Mammary epithelial cell (primary cell): ENCODE measurements at regions of chr5 and their contacts with region 1.

Region 1: DNA sequence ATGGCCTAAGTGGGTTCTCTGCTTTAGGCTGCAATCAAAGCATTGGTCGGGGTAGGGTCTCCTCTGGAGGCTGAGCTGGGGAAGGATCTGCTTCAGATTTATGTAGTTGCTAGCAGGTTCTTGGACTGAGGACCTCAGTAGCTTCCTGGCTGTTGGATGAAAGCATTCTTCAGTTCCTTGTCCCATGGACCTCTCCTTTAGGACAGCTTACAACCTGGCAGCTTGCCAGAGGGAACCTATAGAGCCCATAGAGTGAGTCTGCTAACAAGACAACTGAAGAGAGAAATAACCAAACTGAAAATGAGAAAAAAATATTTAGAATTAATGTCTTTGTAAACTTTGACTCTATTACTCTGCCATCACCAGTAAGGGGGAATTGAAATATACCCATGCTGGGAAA is 12.4 kb downstream of the MRPS30 start:
- DNase-seq: no peak
- H3K4me3 ChIP-seq: no peak overlapping the region
- H3K27ac ChIP-seq: no peak overlapping the region
- H3K4me1 ChIP-seq: no peaks in the 10 kb centered on the region
- H3K27me3 ChIP-seq: no peaks in the 10 kb centered on the region
- CTCF ChIP-seq: no peak

Region 2: DNA sequence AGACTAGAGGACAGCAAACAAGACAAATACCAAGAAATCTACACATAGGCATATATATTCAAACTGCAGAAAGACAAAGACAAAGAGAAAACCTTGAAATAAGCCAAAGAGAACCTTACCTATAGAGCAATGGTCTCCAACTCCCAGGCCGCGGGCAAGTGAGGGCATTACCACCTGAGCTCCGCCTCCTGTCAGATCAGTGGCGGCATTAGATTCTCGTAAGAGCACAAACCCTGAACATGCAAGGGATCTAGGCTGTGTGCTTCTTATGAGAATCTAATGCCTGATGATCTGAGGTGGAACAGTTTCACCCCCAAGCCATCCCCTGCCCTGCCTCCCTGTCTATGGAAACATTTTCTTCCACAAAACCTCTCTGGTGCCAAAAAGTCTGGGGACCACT is 113.4 kb before region 1 on chr5:
- CTCF ChIA-PET with region 1: no interaction called
- dilution Hi-C with region 1: no loop called
- in situ Hi-C with region 1: no loop called
- intact Hi-C with region 1: no loop called
- DNase-seq: no peak
- H3K4me3 ChIP-seq: no peak overlapping the region
- H3K27ac ChIP-seq: no peak overlapping the region
- H3K4me1 ChIP-seq: no peaks in the 10 kb centered on the region
- H3K27me3 ChIP-seq: no peaks in the 10 kb centered on the region
- CTCF ChIP-seq: no peak

Region 3: DNA sequence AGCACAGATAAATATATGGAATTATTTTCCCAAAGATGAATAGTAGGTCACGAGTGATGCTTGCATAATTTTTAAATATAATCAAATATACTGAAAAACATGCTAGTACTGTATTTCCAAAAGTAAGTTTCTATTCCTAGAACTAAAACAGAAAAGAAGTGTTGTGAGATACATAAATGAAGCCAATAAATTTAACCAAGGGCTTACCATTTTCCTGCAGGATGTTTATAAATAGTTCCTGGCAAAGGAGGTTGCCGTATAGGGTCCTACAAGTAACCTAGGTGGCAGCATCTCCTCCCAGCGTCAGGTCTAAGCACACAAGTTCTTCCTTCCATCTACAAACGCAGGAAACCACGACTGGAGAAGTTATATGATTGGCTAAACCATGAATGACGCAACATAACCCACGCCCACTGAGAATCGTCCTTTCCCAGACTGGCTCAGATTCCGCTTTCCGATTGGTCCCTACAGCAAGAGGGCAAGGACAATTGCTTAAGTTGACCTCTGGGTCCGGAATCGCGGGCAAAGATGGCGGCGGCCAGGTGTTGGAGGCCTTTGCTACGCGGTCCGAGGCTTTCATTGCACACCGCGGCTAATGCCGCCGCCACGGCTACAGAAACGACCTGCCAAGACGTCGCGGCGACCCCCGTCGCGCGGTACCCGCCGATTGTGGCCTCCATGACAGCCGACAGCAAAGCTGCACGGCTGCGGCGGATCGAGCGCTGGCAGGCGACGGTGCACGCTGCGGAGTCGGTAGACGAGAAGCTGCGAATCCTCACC is 12.5 kb before region 1 on chr5 and contains the start of gene MRPS30:
- CTCF ChIA-PET with region 1: interaction called, 25 read pairs
- dilution Hi-C with region 1: no loop called
- in situ Hi-C with region 1: no loop called
- intact Hi-C with region 1: no loop called
- DNase-seq: peak; percentile 99
- H3K4me3 ChIP-seq: peak within 1 kb of the TSS; percentile 82 to 93 (median 91)
- H3K27ac ChIP-seq: peak within 1 kb of the TSS; percentile 71
- H3K4me1 ChIP-seq: peaks cover 8% of the 10 kb centered on the region
- H3K27me3 ChIP-seq: no peaks in the 10 kb centered on the region
- CTCF ChIP-seq: peak; percentile 20 to 55
- total RNA-seq, gene MRPS30: 43.3 to 68.7 TPM